Prostate gland (tissue), 2 donors: ENCODE measurements at regions of chr10 and their contacts with region 1.

Region 1: GRCh38 chr10:123800289-123800688 is 91.3 kb downstream of the CPXM2 start:
- DNase-seq: no peak
- H3K4me3 ChIP-seq: no peak overlapping the region
- H3K27ac ChIP-seq: no peak overlapping the region
- H3K4me1 ChIP-seq: no peaks in the 10 kb centered on the region
- H3K27me3 ChIP-seq: no peaks in the 10 kb centered on the region
- CTCF ChIP-seq: no peak
- POLR2A ChIP-seq: no peak

Region 2: GRCh38 chr10:123748711-123749110 is 51.6 kb before region 1 on chr10:
- intact Hi-C with region 1: no loop called
- DNase-seq: no peak
- H3K4me3 ChIP-seq: no peak overlapping the region
- H3K27ac ChIP-seq: no peak overlapping the region
- H3K4me1 ChIP-seq: no peaks in the 10 kb centered on the region
- H3K27me3 ChIP-seq: no peaks in the 10 kb centered on the region
- CTCF ChIP-seq: no peak
- POLR2A ChIP-seq: no peak

Region 3: DNA sequence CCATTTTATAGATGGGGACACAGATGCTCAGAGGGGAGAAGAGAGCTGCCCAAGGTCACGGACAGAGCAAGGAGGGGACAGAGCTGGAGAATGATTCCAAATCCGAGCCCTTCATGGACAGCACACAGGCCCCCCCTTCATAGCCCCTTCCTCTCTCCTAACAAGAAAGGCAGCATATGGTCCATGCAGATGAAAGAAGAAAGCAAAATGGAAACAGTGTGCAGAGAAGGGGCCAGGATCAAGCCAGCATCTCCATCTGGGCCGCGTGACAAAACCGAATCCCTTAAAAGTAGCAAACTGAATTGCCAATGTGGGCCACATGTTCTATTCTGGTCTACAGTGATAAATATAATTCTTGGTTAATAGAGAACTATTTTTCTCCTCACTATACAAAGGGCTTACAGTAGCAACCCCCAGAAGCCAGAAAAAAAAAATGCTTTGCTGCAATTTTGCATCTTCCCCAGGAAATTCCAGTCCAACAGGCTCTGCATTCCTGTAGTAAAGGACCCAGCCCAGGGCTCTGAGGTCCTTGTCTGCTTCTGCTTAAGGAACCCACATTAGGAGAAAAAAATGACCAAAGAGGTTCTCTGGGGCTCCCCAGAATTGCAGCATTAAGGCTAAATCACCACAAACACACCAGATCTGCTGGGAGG is 83.5 kb after region 1 on chr10:
- intact Hi-C with region 1: loop called (anchors 5 kb)
- DNase-seq: no peak
- H3K4me3 ChIP-seq: no peak overlapping the region
- H3K27ac ChIP-seq: no peak overlapping the region
- H3K4me1 ChIP-seq: no peaks in the 10 kb centered on the region
- H3K27me3 ChIP-seq: no peaks in the 10 kb centered on the region
- CTCF ChIP-seq: no peak
- POLR2A ChIP-seq: no peak

Region 4: DNA sequence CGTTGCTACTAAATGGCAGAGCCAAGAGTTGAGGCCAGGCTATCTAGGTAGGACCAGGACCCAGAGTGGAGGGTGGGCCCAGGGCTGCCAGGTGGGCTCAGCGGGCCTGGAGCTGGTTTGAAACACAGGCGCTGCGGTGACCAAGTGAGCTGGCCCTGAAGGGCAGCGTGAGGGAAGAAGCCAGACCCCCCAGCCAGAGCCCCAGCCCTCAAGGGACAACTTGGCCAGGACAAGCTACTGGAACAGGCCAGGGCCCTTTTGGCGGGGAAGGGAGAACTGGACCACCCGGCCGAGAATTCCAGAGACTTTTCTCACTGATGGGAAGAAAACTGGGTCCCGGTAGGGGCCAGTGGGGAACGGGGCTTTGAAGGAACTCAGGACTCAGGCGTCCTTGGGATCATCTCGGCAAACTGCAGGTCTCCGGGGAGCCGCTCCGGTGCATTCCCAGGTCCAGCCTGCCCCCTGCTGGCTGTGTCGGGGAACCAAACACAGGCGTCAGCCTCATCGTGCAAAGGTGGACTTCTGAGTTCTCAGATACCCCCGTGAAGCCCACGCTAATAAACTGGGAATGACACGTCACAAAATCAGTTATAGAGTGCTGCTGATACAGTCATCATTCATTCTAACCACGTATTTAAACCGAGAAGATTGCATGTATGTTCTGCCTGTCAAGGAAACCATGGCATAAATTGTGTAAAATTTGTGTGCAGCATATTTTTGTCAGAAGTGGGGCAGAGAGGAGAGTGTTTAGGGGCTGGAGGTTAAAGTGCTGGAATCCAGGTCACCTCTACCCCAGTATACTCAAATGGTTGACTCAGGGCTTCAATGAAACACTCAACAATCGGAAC is 167.3 kb after region 1 on chr10:
- intact Hi-C with region 1: loop called (anchors 5 kb)
- DNase-seq: peak; percentile 64
- H3K4me3 ChIP-seq: no peak overlapping the region
- H3K27ac ChIP-seq: no peak overlapping the region
- H3K4me1 ChIP-seq: peaks cover 4% of the 10 kb centered on the region
- H3K27me3 ChIP-seq: peaks cover 20% of the 10 kb centered on the region
- CTCF ChIP-seq: peak; percentile 86 to 94 (median 90)
- POLR2A ChIP-seq: no peak